Right cardiac atrium (tissue), 5 donors: ENCODE measurements at regions of chr10 and their contacts with region 1.

Region 1: DNA sequence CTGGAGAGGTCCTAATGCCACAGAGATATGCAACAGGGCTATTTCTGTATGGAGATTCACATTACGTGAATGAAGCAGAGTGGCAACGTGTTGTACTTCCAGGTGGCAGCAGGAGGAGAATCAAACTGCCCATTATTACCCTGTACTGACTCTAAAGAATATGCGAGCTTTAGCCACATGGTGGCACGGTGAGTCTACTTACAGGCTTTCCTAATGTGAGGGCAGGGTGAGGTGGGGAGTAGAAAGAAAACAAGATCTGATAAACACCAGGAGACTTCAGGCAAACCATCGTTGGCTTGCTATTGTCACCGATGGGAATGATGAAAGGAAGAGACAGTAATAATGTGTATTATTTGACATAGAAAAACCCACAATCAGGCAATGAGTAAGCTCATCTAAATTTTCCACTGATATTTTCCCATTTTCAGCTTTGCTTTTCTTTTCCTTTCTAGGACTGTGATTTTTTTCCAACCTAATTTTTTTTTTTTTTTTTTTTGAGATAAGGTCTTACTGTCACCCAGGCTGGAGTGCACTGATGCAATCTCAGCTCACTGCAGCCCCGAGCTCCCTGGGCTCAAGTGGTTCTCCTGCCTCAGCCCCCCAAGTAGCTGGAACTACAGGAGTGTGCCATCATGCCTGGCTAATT is 164.3 kb downstream of the BTAF1 start:
- DNase-seq: peak; percentile 55 to 73 (median 61)
- ATAC-seq: peak; percentile 94 to 97
- H3K4me3 ChIP-seq: no peak overlapping the region
- H3K27ac ChIP-seq: no peak overlapping the region
- H3K4me1 ChIP-seq: no peaks in the 10 kb centered on the region
- H3K27me3 ChIP-seq: no peaks in the 10 kb centered on the region

Region 2: DNA sequence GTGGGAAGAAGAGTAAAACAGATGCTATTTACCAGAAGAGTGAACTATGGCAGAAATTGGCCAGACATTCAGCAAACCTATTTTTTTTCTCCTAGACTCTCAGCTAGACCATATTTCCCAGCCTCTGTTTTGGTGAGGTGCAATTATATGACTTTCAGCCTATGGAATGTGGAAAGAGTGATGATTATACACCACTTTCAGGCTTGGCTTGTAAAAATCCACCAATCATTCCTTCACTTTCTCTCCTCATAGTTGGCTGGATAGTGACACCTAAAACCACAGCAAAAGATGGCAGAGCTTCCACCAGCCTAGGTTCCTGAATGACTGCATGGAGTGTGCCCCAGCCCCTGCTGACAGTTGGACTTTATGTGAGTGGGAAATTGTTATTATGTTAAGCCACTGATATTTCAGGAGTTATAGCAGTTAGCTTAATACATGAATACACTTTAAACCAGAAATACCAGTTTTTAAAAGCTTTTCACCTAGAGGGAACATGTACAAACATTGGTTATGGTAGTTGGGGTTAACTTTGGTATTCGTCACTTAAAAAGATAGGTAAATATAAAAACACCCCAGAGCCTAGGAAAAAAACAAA is 308.8 kb before region 1 on chr10:
- intact Hi-C with region 1: no loop called
- DNase-seq: no peak
- ATAC-seq: no peak
- H3K4me3 ChIP-seq: no peak overlapping the region
- H3K27ac ChIP-seq: no peak overlapping the region
- H3K4me1 ChIP-seq: no peaks in the 10 kb centered on the region
- H3K27me3 ChIP-seq: no peaks in the 10 kb centered on the region

Region 3: DNA sequence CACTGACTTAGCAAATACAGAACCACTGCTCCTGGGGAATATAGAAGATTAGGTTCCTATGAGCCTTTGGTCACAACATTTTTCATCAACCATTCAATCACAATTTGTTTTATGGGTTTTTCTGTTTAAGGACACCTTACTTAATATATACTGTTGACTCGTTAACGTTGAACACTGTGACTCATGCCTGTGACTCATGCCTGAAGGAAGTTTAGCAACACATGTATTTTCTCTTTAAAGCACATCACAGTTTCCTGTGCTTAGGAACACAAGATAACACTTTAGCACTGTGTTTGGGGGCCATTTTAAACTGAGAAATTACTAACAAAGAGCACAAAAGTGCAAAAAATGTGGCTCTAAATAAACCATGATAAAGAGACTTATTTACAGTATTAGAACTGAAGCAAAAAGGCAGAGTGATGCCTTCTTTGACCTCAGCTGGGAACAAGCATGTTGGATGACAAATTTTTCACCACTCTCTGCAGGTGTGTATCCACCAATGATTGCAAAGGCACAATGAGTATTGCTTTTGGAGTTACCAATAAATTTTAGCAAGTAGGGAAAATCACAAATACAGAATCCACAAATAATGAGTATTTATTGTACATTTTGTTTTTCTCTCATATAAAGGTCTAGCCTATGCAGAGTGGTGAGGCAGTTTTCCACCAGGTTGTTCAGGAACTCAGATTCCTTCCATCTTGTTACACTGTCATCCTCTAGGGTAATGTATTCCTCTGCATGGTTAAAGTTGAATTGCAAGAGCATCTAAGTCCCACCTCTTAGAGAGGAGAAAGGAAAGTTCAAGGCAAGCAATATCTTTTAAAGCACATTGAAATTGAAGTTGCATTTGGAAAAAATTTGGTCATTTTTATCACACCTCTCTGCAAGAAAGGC is 185.8 kb before region 1 on chr10:
- intact Hi-C with region 1: no loop called
- DNase-seq: no peak
- ATAC-seq: peak; percentile 41 to 83
- H3K4me3 ChIP-seq: no peak overlapping the region
- H3K27ac ChIP-seq: no peak overlapping the region
- H3K4me1 ChIP-seq: no peaks in the 10 kb centered on the region
- H3K27me3 ChIP-seq: no peaks in the 10 kb centered on the region

Region 4: GRCh38 chr10:92240289-92241157 is 152.7 kb after region 1 on chr10:
- intact Hi-C with region 1: loop called in 1 of 4 experiments (anchors 10 kb)
- DNase-seq: peak in 2 of 3 donors; percentile 33 to 63
- ATAC-seq: peak; percentile 80 to 81
- H3K4me3 ChIP-seq: peak overlapping the region; percentile 71
- H3K27ac ChIP-seq: peak overlapping the region; percentile 84
- H3K4me1 ChIP-seq: no peaks in the 10 kb centered on the region
- H3K27me3 ChIP-seq: no peaks in the 10 kb centered on the region

Region 5: GRCh38 chr10:92290837-92291615 is 203.2 kb after region 1 on chr10 and contains the starts of genes CPEB3 and MARCHF5:
- intact Hi-C with region 1: loop called in 3 of 4 experiments (anchors 5 to 10 kb)
- DNase-seq: peak; percentile 97 to 99 (median 99)
- ATAC-seq: peak; percentile 99 to 100
- H3K4me3 ChIP-seq: peak within 1 kb of the TSS; percentile 74
- H3K27ac ChIP-seq: peak within 1 kb of the TSS; percentile 93
- H3K4me1 ChIP-seq: no peaks in the 10 kb centered on the region
- H3K27me3 ChIP-seq: no peaks in the 10 kb centered on the region
- total RNA-seq, gene CPEB3: 7.2 to 14.3 (median 12.4) TPM
- total RNA-seq, gene MARCHF5: 29.4 to 36.7 (median 32.1) TPM

Region 6: GRCh38 chr10:92407305-92408016 is 319.6 kb after region 1 on chr10:
- intact Hi-C with region 1: no loop called
- DNase-seq: no peak
- ATAC-seq: no peak
- H3K4me3 ChIP-seq: no peak overlapping the region
- H3K27ac ChIP-seq: no peak overlapping the region
- H3K4me1 ChIP-seq: peaks cover 2% of the 10 kb centered on the region
- H3K27me3 ChIP-seq: no peaks in the 10 kb centered on the region

Region 7: GRCh38 chr10:92432596-92432995 is 344.7 kb after region 1 on chr10:
- intact Hi-C with region 1: loop called (anchors 5 to 10 kb)
- DNase-seq: no peak
- ATAC-seq: no peak
- H3K4me3 ChIP-seq: no peak overlapping the region
- H3K27ac ChIP-seq: peak overlapping the region; percentile 33
- H3K4me1 ChIP-seq: peaks cover 7% of the 10 kb centered on the region
- H3K27me3 ChIP-seq: no peaks in the 10 kb centered on the region

Region 8: DNA sequence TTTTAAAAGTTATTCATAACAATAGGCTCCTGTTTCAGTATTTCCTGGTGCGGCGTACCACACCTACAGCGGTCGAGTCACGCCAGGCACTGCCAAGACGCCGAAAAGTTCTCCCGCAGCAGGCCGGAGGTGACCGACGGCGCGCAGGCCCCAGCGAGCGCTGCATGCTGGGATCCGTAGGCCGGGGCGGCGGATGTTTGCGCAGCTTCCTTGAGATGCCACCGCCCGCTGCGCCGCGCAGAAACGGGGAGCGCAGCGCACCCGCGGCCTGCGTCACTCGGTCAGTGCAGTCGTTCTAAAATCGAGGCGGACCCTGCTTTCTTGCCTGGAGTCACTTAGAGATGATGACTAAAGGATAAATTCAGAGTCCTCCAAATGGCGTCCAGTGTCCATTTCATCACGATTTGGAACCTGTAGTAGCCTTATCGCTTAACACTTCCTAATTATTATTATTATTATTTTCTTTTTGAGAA is 503.7 kb after region 1 on chr10:
- intact Hi-C with region 1: no loop called
- DNase-seq: peak; percentile 95 to 97 (median 97)
- ATAC-seq: peak; percentile 95
- H3K4me3 ChIP-seq: peak overlapping the region; percentile 81
- H3K27ac ChIP-seq: peak overlapping the region; percentile 99
- H3K4me1 ChIP-seq: no peaks in the 10 kb centered on the region
- H3K27me3 ChIP-seq: no peaks in the 10 kb centered on the region